A549 (cell line): ENCODE measurements at regions of chr16 and their contacts with region 1.

Region 1: GRCh38 chr16:13919683-13920509 is at the start of gene ERCC4:
- DNase-seq: peak; percentile 93 to 99
- ATAC-seq: peak; percentile 94 to 99
- H3K4me3 ChIP-seq: peak within 1 kb of the TSS; percentile 68
- H3K27ac ChIP-seq: peak within 1 kb of the TSS; percentile 87 to 96
- H3K4me1 ChIP-seq: peaks cover 31% of the 10 kb centered on the region
- CTCF ChIP-seq: peak; percentile 90
- EP300 ChIP-seq: no peak
- POLR2A ChIP-seq: peak; percentile 93
- RAD21 ChIP-seq: peak in 1 of 2 experiments; percentile 58; a peak in 3 of 5 replicates
- polyA plus RNA-seq, gene ERCC4: 15.1 and 20.8 TPM in 2 replicates

Region 2: GRCh38 chr16:13885700-13886099 is 34.2 kb before region 1 on chr16:
- CTCF ChIA-PET with region 1: interaction called, 11 read pairs
- POLR2A ChIA-PET with region 1: no interaction called
- DNase-seq: no peak
- ATAC-seq: no peak
- H3K4me3 ChIP-seq: no peak overlapping the region
- H3K27ac ChIP-seq: no peak overlapping the region
- H3K4me1 ChIP-seq: no peaks in the 10 kb centered on the region
- CTCF ChIP-seq: no peak
- EP300 ChIP-seq: no peak
- POLR2A ChIP-seq: no peak
- RAD21 ChIP-seq: no peak

Region 3: GRCh38 chr16:13909872-13910303 is 10.0 kb before region 1 on chr16:
- CTCF ChIA-PET with region 1: interaction called, 47 read pairs
- POLR2A ChIA-PET with region 1: interaction called, 3 read pairs
- DNase-seq: peak in 1 of 2 experiments; percentile 49
- ATAC-seq: peak; percentile 65 to 85; a peak in 5 of 6 replicates
- H3K4me3 ChIP-seq: no peak overlapping the region
- H3K27ac ChIP-seq: no peak overlapping the region; a peak in 1 of 6 replicates
- H3K4me1 ChIP-seq: no peaks in the 10 kb centered on the region
- CTCF ChIP-seq: no peak
- EP300 ChIP-seq: no peak
- POLR2A ChIP-seq: no peak
- RAD21 ChIP-seq: no peak

Region 4: GRCh38 chr16:13948086-13948485 is 28.2 kb after region 1 on chr16:
- CTCF ChIA-PET with region 1: interaction called, 13 read pairs
- POLR2A ChIA-PET with region 1: no interaction called
- DNase-seq: no peak
- ATAC-seq: no peak
- H3K4me3 ChIP-seq: no peak overlapping the region
- H3K27ac ChIP-seq: no peak overlapping the region
- H3K4me1 ChIP-seq: peaks cover 16% of the 10 kb centered on the region
- CTCF ChIP-seq: no peak
- EP300 ChIP-seq: no peak
- POLR2A ChIP-seq: no peak
- RAD21 ChIP-seq: no peak

Region 5: DNA sequence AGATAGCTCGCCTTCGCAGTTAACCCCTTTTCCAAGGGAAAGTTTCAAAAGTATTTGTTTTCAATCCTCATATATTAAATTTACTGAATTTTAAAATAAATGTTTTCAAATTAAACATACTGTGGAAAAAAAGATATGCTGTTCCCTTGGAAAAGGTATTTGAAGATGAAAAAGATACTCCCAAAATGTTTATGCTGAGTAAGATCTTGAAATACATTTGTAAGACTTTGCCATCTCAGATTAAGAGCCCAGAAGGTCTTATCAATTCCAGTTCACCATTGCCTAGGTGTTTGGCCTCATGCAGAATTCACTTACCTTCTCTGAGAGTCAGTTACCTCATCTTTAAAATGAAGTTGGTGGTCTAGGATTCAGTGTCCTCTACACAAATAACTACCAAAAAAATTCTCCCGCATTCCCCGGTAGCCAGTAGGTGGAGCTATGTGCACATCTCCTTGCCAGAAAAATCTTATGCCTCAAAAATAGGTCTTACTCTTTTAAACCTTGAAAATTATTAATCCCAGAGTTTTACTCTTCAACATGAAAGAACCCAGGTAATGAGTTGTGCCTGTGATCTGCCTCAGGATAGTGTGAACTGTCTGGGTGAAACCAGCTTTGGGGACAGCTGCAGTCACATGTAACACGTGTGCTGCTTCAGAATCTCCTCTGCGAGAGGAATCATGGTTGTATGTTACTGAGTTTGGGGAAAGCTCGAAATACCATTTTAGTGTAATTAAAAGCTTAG is 329.6 kb after region 1 on chr16:
- CTCF ChIA-PET with region 1: interaction called, 36 read pairs
- POLR2A ChIA-PET with region 1: no interaction called
- DNase-seq: peak; percentile 36 to 46
- ATAC-seq: peak; percentile 60 to 61; a peak in 4 of 6 replicates
- H3K4me3 ChIP-seq: no peak overlapping the region
- H3K27ac ChIP-seq: peak overlapping the region; percentile 64 to 65
- H3K4me1 ChIP-seq: peaks cover 8% of the 10 kb centered on the region
- CTCF ChIP-seq: peak; percentile 97
- EP300 ChIP-seq: no peak
- POLR2A ChIP-seq: no peak
- RAD21 ChIP-seq: peak; percentile 89 to 93

Region 6: DNA sequence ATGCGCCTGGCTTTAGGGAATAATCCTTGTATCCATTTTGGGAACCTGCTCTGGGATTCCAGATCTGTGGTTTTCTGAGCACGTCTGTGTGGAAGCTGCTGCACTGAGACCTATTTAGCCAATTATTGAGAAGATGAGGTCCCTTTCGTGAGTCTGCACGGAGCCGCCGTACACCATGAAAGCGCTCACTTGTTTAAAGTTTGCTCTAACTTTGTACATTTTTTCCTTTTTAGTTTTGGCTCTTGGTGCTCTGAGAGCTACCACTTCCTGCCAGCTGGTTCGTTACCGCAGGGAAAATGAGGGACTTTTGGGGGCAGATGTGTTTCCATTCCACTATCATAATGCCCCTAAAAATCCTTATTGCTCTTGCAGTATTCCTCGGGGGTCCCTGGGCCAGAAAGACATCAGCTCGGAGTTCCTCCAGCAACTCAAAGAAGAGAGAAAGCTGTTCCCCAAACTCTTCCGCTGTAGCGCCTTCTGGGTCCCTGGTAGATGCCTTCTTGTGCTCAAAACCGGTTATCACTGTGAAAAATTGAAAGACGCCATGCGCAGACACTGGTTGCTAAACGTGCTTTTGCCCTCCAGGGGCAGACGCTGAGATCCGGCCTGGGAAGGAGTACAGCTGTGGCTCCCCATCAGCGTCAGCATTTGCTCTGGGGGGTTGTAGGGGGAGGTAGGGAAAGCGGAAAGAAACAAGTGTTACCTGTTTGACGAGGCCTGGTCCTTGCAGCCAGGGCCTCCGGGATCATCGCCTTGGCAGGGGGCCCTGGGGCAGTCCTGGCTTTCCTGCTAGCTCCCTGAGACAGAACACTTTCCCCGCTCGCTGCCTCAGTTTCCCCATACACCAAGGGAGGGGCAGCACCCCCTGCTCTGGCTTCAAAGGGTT is 389.3 kb after region 1 on chr16:
- CTCF ChIA-PET with region 1: no interaction called
- POLR2A ChIA-PET with region 1: no interaction called
- DNase-seq: no peak
- ATAC-seq: peak; percentile 10 to 14; a peak in 4 of 6 replicates
- H3K4me3 ChIP-seq: peak overlapping the region; percentile 98
- H3K27ac ChIP-seq: peak overlapping the region; percentile 99 to 100
- H3K4me1 ChIP-seq: peaks cover 85% of the 10 kb centered on the region
- CTCF ChIP-seq: no peak
- EP300 ChIP-seq: no peak
- POLR2A ChIP-seq: no peak
- RAD21 ChIP-seq: no peak